Caco-2 (cell line): ENCODE measurements at regions of chr3 and their contacts with region 1.

Region 1: DNA sequence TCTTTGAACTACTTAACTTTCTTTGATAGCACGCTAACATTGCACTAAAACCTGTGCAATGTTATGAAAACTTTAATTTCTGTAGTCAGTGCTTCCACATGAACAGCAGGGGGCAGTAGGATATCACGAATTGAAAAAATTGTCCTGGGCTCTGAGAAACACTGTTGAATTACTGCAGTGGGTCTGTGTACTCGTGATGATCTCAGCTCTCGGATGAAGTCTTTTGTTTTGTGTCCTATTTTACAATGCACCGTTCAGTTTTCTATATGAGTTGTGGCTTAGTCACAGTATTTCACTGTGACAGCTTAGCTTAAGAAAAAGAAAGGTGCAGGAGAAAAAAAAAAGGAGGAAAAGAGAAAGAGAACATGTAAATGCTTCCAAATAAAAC is 141.3 kb upstream of the CCDC54 start:
- DNase-seq: peak in 1 of 2 experiments; percentile 64
- H3K4me3 ChIP-seq: peak overlapping the region; percentile 25
- H3K4me3 Mint-ChIP-seq: peak overlapping the region; percentile 66
- H3K27ac Mint-ChIP-seq: peak overlapping the region; percentile 27
- H3K4me1 ChIP-seq: 0 out of 2 replicates have a peak, but pooled peaks cover 5% of the 10 kb centered on the region
- H3K4me1 Mint-ChIP-seq: peaks cover 7% of the 10 kb centered on the region
- H3K27me3 ChIP-seq: no peaks in the 10 kb centered on the region; the same call in 1 of the 2 replicates
- H3K27me3 Mint-ChIP-seq: peaks cover 10% of the 10 kb centered on the region
- CTCF ChIP-seq: peak; percentile 71 to 79

Region 2: GRCh38 chr3:106957029-106957428 is 278.9 kb before region 1 on chr3:
- CTCF ChIA-PET with region 1: no interaction called
- POLR2A ChIA-PET with region 1: no interaction called
- intact Hi-C with region 1: no loop called
- DNase-seq: no peak
- H3K4me3 ChIP-seq: no peak overlapping the region
- H3K4me3 Mint-ChIP-seq: no peak overlapping the region
- H3K27ac Mint-ChIP-seq: no peak overlapping the region
- H3K4me1 ChIP-seq: no peaks in the 10 kb centered on the region
- H3K4me1 Mint-ChIP-seq: no peaks in the 10 kb centered on the region
- H3K27me3 ChIP-seq: no peaks in the 10 kb centered on the region
- H3K27me3 Mint-ChIP-seq: no peaks in the 10 kb centered on the region
- CTCF ChIP-seq: no peak

Region 3: GRCh38 chr3:106985721-106986120 is 250.2 kb before region 1 on chr3:
- CTCF ChIA-PET with region 1: no interaction called
- POLR2A ChIA-PET with region 1: no interaction called
- intact Hi-C with region 1: no loop called
- DNase-seq: no peak
- H3K4me3 ChIP-seq: no peak overlapping the region
- H3K4me3 Mint-ChIP-seq: no peak overlapping the region
- H3K27ac Mint-ChIP-seq: no peak overlapping the region
- H3K4me1 ChIP-seq: no peaks in the 10 kb centered on the region
- H3K4me1 Mint-ChIP-seq: no peaks in the 10 kb centered on the region
- H3K27me3 ChIP-seq: no peaks in the 10 kb centered on the region
- H3K27me3 Mint-ChIP-seq: no peaks in the 10 kb centered on the region
- CTCF ChIP-seq: no peak

Region 4: GRCh38 chr3:107222907-107223306 is 13.0 kb before region 1 on chr3:
- CTCF ChIA-PET with region 1: no interaction called
- POLR2A ChIA-PET with region 1: no interaction called
- intact Hi-C with region 1: no loop called
- DNase-seq: no peak
- H3K4me3 ChIP-seq: no peak overlapping the region
- H3K4me3 Mint-ChIP-seq: no peak overlapping the region
- H3K27ac Mint-ChIP-seq: no peak overlapping the region
- H3K4me1 ChIP-seq: no peaks in the 10 kb centered on the region
- H3K4me1 Mint-ChIP-seq: no peaks in the 10 kb centered on the region
- H3K27me3 ChIP-seq: no peaks in the 10 kb centered on the region
- H3K27me3 Mint-ChIP-seq: no peaks in the 10 kb centered on the region
- CTCF ChIP-seq: no peak

Region 5: DNA sequence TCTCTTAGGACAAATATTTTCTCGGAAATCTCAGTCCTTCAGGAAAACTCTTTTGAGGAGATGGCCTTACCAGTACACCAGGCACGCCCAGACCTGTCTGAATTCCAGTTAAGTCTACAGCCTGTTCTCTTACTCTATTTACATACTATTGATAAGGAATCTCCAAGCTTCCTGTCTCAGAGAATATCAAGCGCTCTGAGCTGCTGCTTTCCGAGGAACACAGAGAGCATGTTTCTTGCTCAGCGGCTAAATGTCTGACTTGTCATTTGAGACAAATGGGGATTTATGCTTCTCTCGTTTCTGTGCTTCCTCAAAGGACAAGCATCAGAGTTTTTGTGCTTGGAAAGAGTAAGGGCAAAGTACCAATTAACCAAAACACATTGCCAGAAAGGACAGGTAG is 29.0 kb after region 1 on chr3:
- CTCF ChIA-PET with region 1: no interaction called
- POLR2A ChIA-PET with region 1: no interaction called
- intact Hi-C with region 1: loop called (anchors 2 kb)
- DNase-seq: peak; percentile 5 to 45
- H3K4me3 ChIP-seq: no peak overlapping the region
- H3K4me3 Mint-ChIP-seq: no peak overlapping the region
- H3K27ac Mint-ChIP-seq: no peak overlapping the region
- H3K4me1 ChIP-seq: peaks cover 14% of the 10 kb centered on the region; the same call in 1 of the 2 replicates
- H3K4me1 Mint-ChIP-seq: peaks cover 12% of the 10 kb centered on the region
- H3K27me3 ChIP-seq: no peaks in the 10 kb centered on the region; the same call in none of the 2 replicates
- H3K27me3 Mint-ChIP-seq: no peaks in the 10 kb centered on the region
- CTCF ChIP-seq: no peak

Region 6: GRCh38 chr3:107323723-107324122 is 87.8 kb after region 1 on chr3:
- CTCF ChIA-PET with region 1: no interaction called
- POLR2A ChIA-PET with region 1: no interaction called
- intact Hi-C with region 1: no loop called
- DNase-seq: no peak
- H3K4me3 ChIP-seq: no peak overlapping the region
- H3K4me3 Mint-ChIP-seq: no peak overlapping the region
- H3K27ac Mint-ChIP-seq: no peak overlapping the region
- H3K4me1 ChIP-seq: no peaks in the 10 kb centered on the region
- H3K4me1 Mint-ChIP-seq: no peaks in the 10 kb centered on the region
- H3K27me3 ChIP-seq: no peaks in the 10 kb centered on the region
- H3K27me3 Mint-ChIP-seq: no peaks in the 10 kb centered on the region
- CTCF ChIP-seq: no peak

Region 7: GRCh38 chr3:107543666-107544065 is 307.7 kb after region 1 on chr3:
- CTCF ChIA-PET with region 1: no interaction called
- POLR2A ChIA-PET with region 1: no interaction called
- intact Hi-C with region 1: loop called (anchors 1 kb)
- DNase-seq: no peak
- H3K4me3 ChIP-seq: no peak overlapping the region
- H3K4me3 Mint-ChIP-seq: no peak overlapping the region
- H3K27ac Mint-ChIP-seq: no peak overlapping the region
- H3K4me1 ChIP-seq: no peaks in the 10 kb centered on the region
- H3K4me1 Mint-ChIP-seq: no peaks in the 10 kb centered on the region
- H3K27me3 ChIP-seq: no peaks in the 10 kb centered on the region
- H3K27me3 Mint-ChIP-seq: peaks cover 3% of the 10 kb centered on the region
- CTCF ChIP-seq: peak; percentile 29 to 35

Region 8: GRCh38 chr3:107740992-107741896 is 505.3 kb after region 1 on chr3:
- CTCF ChIA-PET with region 1: no interaction called
- POLR2A ChIA-PET with region 1: no interaction called
- intact Hi-C with region 1: loop called (anchors 2 kb)
- DNase-seq: no peak
- H3K4me3 ChIP-seq: no peak overlapping the region
- H3K4me3 Mint-ChIP-seq: no peak overlapping the region
- H3K27ac Mint-ChIP-seq: no peak overlapping the region
- H3K4me1 ChIP-seq: no peaks in the 10 kb centered on the region
- H3K4me1 Mint-ChIP-seq: no peaks in the 10 kb centered on the region
- H3K27me3 ChIP-seq: no peaks in the 10 kb centered on the region
- H3K27me3 Mint-ChIP-seq: peaks cover 14% of the 10 kb centered on the region
- CTCF ChIP-seq: peak; percentile 41 to 43

Region 9: GRCh38 chr3:108477511-108478147 is 1241.7 kb after region 1 on chr3:
- CTCF ChIA-PET with region 1: no interaction called
- POLR2A ChIA-PET with region 1: no interaction called
- intact Hi-C with region 1: loop called (anchors 10 kb)
- DNase-seq: peak; percentile 53 to 57
- H3K4me3 ChIP-seq: no peak overlapping the region
- H3K4me3 Mint-ChIP-seq: no peak overlapping the region
- H3K27ac Mint-ChIP-seq: no peak overlapping the region
- H3K4me1 ChIP-seq: no peaks in the 10 kb centered on the region
- H3K4me1 Mint-ChIP-seq: no peaks in the 10 kb centered on the region
- H3K27me3 ChIP-seq: no peaks in the 10 kb centered on the region
- H3K27me3 Mint-ChIP-seq: peaks cover 2% of the 10 kb centered on the region
- CTCF ChIP-seq: peak; percentile 59 to 70